ENCODE measurements at regions of chr1 and their contacts with region 1.

Region 1: DNA sequence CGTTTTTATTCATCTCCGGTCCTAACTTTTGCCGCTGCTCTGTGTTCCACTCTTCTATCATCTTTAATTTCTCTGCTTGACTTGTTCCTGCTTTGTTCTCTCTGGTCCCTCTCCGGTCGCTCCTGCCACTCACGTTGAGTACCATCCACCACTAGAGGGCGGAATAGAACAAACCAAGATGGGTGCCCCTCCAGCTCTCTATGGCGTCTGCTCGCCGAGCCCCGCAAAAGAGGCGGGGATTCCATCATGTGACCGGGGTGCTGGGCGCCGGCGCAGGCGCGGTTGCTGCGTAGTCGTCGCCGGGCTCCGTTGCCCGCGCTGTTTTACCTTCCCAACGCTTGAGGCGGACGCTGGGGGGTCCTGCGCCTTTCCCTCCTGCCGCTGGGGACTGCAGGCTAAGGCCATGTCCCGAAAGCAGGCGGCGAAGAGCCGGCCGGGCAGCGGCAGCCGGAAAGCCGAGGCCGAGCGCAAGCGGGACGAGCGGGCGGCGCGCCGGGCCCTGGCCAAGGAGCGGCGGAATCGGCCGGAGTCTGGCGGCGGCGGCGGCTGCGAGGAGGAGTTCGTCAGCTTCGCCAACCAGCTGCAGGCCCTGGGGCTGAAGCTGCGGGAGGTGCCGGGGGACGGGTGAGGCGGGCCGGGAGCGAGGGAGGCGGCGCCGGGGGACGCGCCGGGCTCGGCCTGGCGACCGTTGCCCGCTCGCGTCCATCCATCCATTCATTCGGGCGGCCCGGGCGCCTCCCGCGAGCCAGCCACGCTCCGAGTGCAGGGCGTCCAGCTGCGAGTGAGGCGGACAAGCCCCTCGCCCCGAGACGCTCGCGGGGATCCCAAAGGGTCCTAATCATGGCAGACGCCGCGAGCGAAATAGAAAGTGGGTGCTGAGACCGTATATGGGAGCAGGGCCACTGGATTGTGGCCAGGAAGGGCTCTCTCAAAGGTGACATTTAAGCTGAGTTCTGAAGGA is at the start of gene OTUD3:
- DNase-seq: peak; percentile 95 to 96
- H3K4me3 ChIP-seq: peak within 1 kb of the TSS; percentile 53 to 88
- H3K27ac ChIP-seq: peak within 1 kb of the TSS; percentile 81 to 93
- H3K4me1 ChIP-seq: no peaks in the 10 kb centered on the region
- H3K27me3 ChIP-seq: no peaks in the 10 kb centered on the region
- CTCF ChIP-seq: peak; percentile 85 to 96 (median 94)
- POLR2A ChIP-seq: peak; percentile 89 to 93
- total RNA-seq, gene OTUD3: 2.6 to 20.8 (median 10.7) TPM

Region 2: DNA sequence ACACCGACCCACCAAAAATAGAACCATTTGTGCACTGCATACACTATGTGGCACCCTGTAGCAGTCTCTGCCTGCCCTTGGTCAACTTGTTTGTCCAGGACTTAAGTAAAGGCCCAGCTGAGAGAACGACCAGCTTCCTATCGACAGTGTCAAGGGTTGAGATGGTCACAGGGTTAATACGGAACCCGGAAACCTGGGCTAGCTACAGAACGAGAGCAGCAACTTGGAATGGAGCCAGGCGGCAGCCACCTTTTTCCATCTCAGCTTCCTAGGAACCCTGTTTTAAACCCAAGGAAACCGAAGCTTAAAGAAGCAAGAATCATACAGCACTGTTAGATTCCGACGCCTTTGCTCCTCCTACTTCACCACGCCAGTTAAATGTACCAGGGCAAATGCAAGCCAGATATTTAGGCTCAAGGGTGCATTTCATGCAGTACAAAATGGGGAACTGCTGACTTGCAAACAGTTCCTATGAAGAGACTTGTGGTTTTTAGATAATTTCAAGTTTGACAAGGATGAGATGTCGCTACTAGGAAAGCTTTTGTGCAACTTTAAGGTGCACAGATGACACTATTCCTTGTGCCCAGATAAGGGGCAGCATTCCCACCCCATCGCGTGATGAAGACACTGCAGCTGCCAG is 534.7 kb before region 1 on chr1:
- intact Hi-C with region 1: no loop called
- DNase-seq: no peak
- H3K4me3 ChIP-seq: no peak overlapping the region
- H3K27ac ChIP-seq: no peak overlapping the region
- H3K4me1 ChIP-seq: peaks cover 0 to 6% of the 10 kb centered on the region in 2 donors
- H3K27me3 ChIP-seq: no peaks in the 10 kb centered on the region
- CTCF ChIP-seq: no peak
- POLR2A ChIP-seq: no peak

Region 3: DNA sequence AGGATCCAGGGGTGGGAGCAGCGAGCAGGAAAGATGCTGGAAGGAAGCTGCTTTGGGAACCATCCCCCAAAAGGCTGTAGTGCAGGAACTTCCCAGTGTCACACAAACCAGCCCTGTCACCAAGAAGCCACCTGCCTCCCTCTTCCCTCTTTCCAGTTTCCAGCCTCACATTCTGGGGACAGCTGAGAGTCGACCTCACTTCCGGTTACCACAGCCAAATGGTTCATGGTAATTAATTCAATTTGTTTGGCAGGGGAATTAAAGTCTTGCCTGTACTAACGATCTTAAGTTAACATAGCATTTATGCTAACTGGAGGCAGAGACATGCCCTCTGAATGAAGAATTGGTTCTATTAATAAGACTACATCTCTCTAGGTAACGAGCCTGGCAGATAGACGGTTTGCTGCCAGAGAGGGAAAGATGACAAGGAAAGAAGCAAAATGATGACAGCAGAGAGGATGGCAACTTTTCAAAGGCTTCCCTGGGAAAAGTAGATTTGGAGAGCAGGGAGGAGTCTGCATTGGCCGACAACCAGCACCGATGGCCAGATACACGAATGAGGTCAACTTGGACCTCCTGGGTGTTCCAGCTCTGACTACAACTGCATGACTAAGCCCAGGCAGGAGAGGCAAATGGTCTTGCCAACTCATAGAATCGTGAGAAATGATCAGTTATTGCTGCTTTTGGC is 146.8 kb before region 1 on chr1:
- intact Hi-C with region 1: no loop called
- DNase-seq: peak; percentile 83 to 86
- H3K4me3 ChIP-seq: no peak overlapping the region
- H3K27ac ChIP-seq: peak overlapping the region; percentile 44 to 74
- H3K4me1 ChIP-seq: peaks cover 0 to 12% of the 10 kb centered on the region in 2 donors
- H3K27me3 ChIP-seq: no peaks in the 10 kb centered on the region
- CTCF ChIP-seq: no peak
- POLR2A ChIP-seq: no peak

Region 4: GRCh38 chr1:19799877-19800804 is 82.2 kb before region 1 on chr1 and contains the start of gene TMCO4:
- intact Hi-C with region 1: loop called (anchors 10 kb)
- DNase-seq: peak; percentile 35 to 55
- H3K4me3 ChIP-seq: peak within 1 kb of the TSS; percentile 64 to 71
- H3K27ac ChIP-seq: peak within 1 kb of the TSS; percentile 89 to 90
- H3K4me1 ChIP-seq: no peaks in the 10 kb centered on the region
- H3K27me3 ChIP-seq: no peaks in the 10 kb centered on the region
- CTCF ChIP-seq: no peak
- POLR2A ChIP-seq: peak in 1 of 2 donors; percentile 3
- total RNA-seq, gene TMCO4: 11.8 to 41.2 (median 21.8) TPM

Measured in uterus (tissue), 4 donors.